HepG2 (cell line): ENCODE measurements at regions of chr1 and their contacts with region 1.

Region 1: DNA sequence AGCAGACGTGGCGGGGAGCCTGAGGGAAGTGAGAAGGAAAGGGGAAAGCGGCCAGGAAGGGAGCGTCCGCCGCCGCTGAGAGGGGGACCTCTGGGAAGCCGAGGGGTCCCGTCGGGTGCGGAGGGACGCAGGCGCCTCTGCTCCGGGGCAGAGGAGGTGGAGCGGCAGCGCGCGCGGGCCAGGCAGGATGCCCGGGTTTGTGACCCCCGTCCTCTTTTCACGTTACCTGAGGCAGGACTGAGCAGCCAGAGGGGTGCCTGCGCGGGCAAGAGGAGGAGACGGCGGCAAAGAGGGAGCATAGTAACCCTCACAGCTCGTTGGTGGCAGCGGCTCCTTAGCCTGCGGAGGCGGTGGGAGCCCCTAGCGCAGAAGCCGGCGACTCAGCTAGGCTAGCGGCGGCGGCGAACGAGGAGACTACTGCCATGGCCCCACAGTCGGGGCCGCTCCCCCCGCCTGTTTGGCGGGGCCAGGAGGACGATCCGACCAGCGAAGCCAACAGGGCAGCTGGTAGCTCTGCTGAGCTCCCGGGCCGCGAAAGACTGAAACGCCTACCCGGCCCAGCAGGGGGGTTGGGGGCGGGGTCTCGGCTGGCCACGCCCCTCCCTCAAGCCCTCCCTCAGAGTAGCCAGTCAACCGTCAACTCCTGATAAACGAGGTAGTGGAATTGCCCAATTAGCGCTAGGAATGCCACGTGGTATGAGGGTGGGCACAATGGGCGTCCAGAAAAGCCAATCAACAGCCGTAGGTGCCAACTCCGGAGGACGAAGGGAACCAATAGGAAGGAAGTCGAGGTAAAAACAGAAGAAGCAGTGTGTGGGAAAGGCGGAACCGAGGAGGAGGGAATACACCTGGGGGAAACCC is at the start of gene TESK2:
- DNase-seq: peak; percentile 100
- ATAC-seq: peak; percentile 93
- H3K4me3 ChIP-seq: peak within 1 kb of the TSS; percentile 90 to 98 (median 93)
- H3K27ac ChIP-seq: peak within 1 kb of the TSS; percentile 78
- H3K4me1 ChIP-seq: peaks cover 29% of the 10 kb centered on the region
- H3K27me3 ChIP-seq: no peaks in the 10 kb centered on the region; a peak in 1 of 5 replicates
- CTCF ChIP-seq: no peak; the same call in 1 of the 2 replicates
- EP300 ChIP-seq: no peak
- POLR2A ChIP-seq: peak; percentile 90
- RAD21 ChIP-seq: peak; percentile 42; the same call in 1 of the 2 replicates
- total RNA-seq, gene TESK2: 5.5 and 6.9 TPM in 2 replicates

Region 2: GRCh38 chr1:44835738-44836675 is 654.8 kb before region 1 on chr1:
- CTCF ChIA-PET with region 1: interaction called, 3 read pairs
- POLR2A ChIA-PET with region 1: no interaction called
- in situ Hi-C with region 1: no loop called
- intact Hi-C with region 1: loop called (anchors 5 kb)
- DNase-seq: peak; percentile 65
- ATAC-seq: peak; percentile 70
- H3K4me3 ChIP-seq: peak overlapping the region in 1 of 3 experiments; percentile 26; a peak in 1 of 6 replicates
- H3K27ac ChIP-seq: no peak overlapping the region
- H3K4me1 ChIP-seq: peaks cover 60% of the 10 kb centered on the region
- H3K27me3 ChIP-seq: peaks cover 0 to 16% of the 10 kb centered on the region in 2 experiments; a peak in 1 of 5 replicates
- CTCF ChIP-seq: peak; percentile 91
- EP300 ChIP-seq: no peak
- POLR2A ChIP-seq: no peak
- RAD21 ChIP-seq: peak; percentile 71; the same call in 1 of the 2 replicates

Region 3: DNA sequence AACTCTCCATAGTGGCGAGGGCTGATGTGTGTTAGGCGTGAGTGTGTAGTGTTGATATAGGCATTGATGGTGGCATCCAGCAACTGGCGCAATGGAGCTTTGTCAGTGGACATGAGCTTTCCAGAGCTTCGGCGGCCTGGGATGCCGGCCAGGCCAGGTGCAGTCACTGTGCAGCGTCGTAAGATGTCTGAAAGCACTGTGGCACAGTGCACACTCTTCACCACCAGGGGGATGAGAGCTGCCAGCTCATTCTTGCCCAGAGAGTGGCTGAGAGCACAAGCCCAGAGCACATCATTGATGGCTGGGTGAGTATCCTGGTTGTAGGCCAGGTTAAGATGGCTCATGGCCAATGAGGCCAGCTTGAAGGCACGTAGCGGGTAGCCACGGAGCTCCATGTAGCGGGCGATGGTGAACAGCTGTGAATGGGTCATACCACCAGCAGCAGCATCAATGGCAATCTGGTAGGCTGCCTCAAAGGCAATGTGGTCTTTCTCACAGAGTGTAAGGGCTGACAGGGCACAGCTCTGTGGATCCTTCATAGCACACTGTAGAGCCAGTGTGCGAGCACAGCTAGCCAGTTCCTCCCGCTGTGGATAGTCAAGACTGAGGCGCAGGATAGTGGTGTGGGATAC is 472.1 kb before region 1 on chr1:
- CTCF ChIA-PET with region 1: no interaction called
- POLR2A ChIA-PET with region 1: interaction called, 17 read pairs
- in situ Hi-C with region 1: loop called (anchors 5 kb)
- intact Hi-C with region 1: loop called (anchors 2 kb)
- DNase-seq: peak; percentile 47
- ATAC-seq: peak; percentile 91
- H3K4me3 ChIP-seq: no peak overlapping the region
- H3K27ac ChIP-seq: no peak overlapping the region
- H3K4me1 ChIP-seq: peaks cover 12% of the 10 kb centered on the region
- H3K27me3 ChIP-seq: no peaks in the 10 kb centered on the region
- CTCF ChIP-seq: peak; percentile 86
- EP300 ChIP-seq: no peak
- POLR2A ChIP-seq: no peak
- RAD21 ChIP-seq: peak; percentile 87

Region 4: DNA sequence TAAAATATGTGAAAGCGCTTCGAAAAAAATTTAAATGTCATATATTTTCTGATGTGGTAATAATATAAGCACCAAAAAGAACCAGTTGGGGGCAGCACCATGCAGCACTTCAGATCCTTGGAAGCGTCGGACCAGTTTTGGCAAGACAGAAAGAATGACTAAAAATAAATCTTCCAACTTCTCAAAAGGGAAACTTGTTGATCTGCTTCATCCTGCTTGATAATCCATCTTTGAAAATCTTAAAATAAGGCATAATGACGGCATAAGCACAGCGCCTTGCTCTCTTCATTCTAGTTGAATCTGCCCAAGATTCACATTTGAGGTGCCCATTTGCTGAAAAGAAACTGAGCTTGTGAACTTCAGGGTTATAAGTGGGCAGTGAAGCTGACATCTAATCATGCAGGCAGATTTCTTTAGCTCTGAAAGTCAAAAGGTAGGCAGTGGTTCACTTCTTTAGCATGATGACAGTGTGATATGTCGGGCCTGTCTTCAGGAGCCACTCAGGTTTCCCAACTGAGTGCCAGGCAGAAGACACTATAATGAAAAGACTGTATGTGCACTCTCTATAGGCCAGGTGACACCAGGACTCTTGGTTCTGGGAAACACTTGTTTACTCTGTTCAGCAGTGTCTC is 130.9 kb before region 1 on chr1:
- CTCF ChIA-PET with region 1: interaction called, 32 read pairs
- POLR2A ChIA-PET with region 1: interaction called, 5 read pairs
- in situ Hi-C with region 1: loop called (anchors 5 kb)
- intact Hi-C with region 1: loop called (anchors 1 kb)
- DNase-seq: peak; percentile 40
- ATAC-seq: peak; percentile 47
- H3K4me3 ChIP-seq: no peak overlapping the region
- H3K27ac ChIP-seq: no peak overlapping the region
- H3K4me1 ChIP-seq: peaks cover 32% of the 10 kb centered on the region
- H3K27me3 ChIP-seq: no peaks in the 10 kb centered on the region
- CTCF ChIP-seq: peak; percentile 53
- EP300 ChIP-seq: no peak
- POLR2A ChIP-seq: no peak
- RAD21 ChIP-seq: peak; percentile 46; the same call in 1 of the 2 replicates

Region 5: GRCh38 chr1:45654540-45655280 is 163.9 kb after region 1 on chr1:
- CTCF ChIA-PET with region 1: no interaction called
- POLR2A ChIA-PET with region 1: no interaction called
- in situ Hi-C with region 1: no loop called
- intact Hi-C with region 1: no loop called
- DNase-seq: no peak
- ATAC-seq: no peak
- H3K4me3 ChIP-seq: no peak overlapping the region
- H3K27ac ChIP-seq: no peak overlapping the region
- H3K4me1 ChIP-seq: peaks cover 40% of the 10 kb centered on the region
- H3K27me3 ChIP-seq: no peaks in the 10 kb centered on the region
- CTCF ChIP-seq: no peak
- EP300 ChIP-seq: no peak
- POLR2A ChIP-seq: no peak
- RAD21 ChIP-seq: no peak

Region 6: GRCh38 chr1:45755697-45756096 is 264.8 kb after region 1 on chr1:
- CTCF ChIA-PET with region 1: no interaction called
- POLR2A ChIA-PET with region 1: no interaction called
- in situ Hi-C with region 1: no loop called
- intact Hi-C with region 1: no loop called
- DNase-seq: no peak
- ATAC-seq: no peak
- H3K4me3 ChIP-seq: no peak overlapping the region
- H3K27ac ChIP-seq: no peak overlapping the region
- H3K4me1 ChIP-seq: peaks cover 46% of the 10 kb centered on the region
- H3K27me3 ChIP-seq: peaks cover 0 to 22% of the 10 kb centered on the region in 2 experiments; a peak in 2 of 5 replicates
- CTCF ChIP-seq: no peak
- EP300 ChIP-seq: no peak
- POLR2A ChIP-seq: no peak
- RAD21 ChIP-seq: no peak